ENCODE measurements at regions of chr9 and their contacts with region 1.

Region 1: GRCh38 chr9:17578911-17579793 is at the start of gene SH3GL2:
- DNase-seq: peak; percentile 4
- H3K4me3 ChIP-seq: peak within 1 kb of the TSS; percentile 47
- H3K27ac ChIP-seq: no peak within 1 kb of the TSS
- H3K27me3 ChIP-seq: peaks cover 32% of the 10 kb centered on the region
- CTCF ChIP-seq: no peak

Region 2: DNA sequence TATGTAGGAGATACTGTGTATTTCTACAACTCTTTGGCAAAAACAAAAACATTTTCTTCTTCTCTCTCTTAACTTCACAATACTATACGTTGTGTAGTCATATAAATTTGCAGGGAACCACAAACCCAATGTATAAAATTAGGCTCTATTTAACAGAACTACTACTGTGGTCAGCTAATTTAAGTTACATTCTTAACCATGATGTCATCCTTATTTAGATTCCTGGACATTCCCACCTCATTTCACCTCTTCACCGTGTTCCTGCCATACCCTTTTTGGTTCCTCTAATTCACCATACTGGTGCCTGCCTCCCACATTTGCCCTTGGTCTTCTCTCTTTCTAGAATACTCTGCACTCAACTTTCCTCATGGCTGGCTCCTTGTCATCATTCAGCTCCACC is 76.0 kb before region 1 on chr9:
- in situ Hi-C with region 1: no loop called
- DNase-seq: no peak
- H3K4me3 ChIP-seq: no peak overlapping the region
- H3K27ac ChIP-seq: no peak overlapping the region
- H3K27me3 ChIP-seq: no peaks in the 10 kb centered on the region
- CTCF ChIP-seq: no peak

Region 3: DNA sequence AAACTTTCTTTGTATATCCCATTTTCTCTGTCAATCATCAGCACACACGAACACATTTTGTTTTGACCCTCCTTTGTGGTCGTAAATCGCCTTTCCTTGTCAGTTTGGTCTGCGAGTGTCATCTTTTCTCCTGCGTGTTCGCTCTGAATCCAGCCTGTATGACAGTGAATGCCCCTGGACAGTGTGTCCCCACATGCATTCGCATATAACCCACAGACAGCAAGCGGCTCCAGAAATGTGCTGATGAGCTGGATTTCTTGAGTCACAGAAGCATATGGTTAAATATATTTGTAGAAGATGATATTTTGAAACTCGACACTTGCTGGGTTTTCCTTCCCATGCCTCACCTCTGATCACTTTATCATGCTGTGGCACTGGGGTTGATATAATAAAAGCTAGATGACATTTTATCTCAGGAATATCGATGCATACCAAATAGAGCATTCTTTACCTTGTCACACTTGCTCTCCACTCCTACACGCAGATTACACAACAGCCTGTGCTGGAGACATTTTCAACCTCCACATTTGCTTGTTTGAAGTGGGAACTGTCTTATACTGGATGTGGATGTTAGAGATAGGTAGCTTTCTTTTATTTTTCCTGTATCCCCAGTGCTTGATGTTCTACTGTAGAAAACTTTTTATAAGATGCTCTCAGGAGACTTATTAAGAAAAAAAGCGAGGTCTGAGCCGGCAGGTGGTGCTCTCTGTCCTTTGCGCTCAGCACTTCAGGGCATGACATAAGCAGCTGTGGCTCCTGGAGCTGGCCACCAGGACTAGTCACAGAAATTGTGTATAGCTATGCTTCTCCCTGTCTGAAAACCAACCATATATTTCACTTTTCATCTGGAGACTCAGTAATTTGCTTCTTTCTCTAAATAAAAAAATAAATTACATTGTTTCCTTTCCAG is 214.8 kb after region 1 on chr9:
- in situ Hi-C with region 1: loop called (anchors 25 kb)
- DNase-seq: peak; percentile 6
- H3K4me3 ChIP-seq: no peak overlapping the region
- H3K27ac ChIP-seq: no peak overlapping the region
- H3K27me3 ChIP-seq: no peaks in the 10 kb centered on the region
- CTCF ChIP-seq: peak; percentile 49